Caco-2 (cell line): ENCODE measurements at regions of chrX and their contacts with region 1.

Region 1: DNA sequence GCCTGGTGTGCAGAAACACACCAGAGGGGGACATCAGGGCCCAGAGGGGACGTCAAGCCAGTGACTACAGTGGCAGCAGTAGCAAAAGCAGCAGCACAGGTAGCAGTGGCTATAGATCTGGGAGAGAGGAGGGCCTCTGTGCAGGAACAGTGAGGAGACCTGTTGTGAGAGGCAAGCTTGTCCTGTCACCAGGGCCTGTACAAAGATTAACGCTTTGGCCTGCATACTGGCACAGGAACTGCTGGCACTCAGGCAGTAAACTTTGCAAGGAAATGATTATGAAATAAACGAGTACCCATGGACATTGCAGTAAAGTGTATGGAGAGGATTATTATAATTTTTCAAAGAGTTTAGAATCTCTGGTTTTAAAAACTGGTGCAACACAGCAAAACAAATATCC is 5.5 kb upstream of the PHF8 start:
- DNase-seq: no peak
- H3K4me3 ChIP-seq: no peak overlapping the region
- H3K4me3 Mint-ChIP-seq: no peak overlapping the region
- H3K27ac Mint-ChIP-seq: no peak overlapping the region
- H3K4me1 ChIP-seq: 0 out of 2 replicates have a peak, but pooled peaks cover 5% of the 10 kb centered on the region
- H3K4me1 Mint-ChIP-seq: peaks cover 6% of the 10 kb centered on the region
- H3K27me3 ChIP-seq: no peaks in the 10 kb centered on the region
- H3K27me3 Mint-ChIP-seq: no peaks in the 10 kb centered on the region
- CTCF ChIP-seq: no peak

Region 2: GRCh38 chrX:53882331-53882730 is 167.5 kb before region 1 on chrX:
- CTCF ChIA-PET with region 1: no interaction called
- POLR2A ChIA-PET with region 1: no interaction called
- intact Hi-C with region 1: no loop called
- DNase-seq: peak; percentile 15 to 54
- H3K4me3 ChIP-seq: no peak overlapping the region
- H3K4me3 Mint-ChIP-seq: peak overlapping the region; percentile 12
- H3K27ac Mint-ChIP-seq: peak overlapping the region; percentile 67
- H3K4me1 ChIP-seq: peaks cover 4% of the 10 kb centered on the region; the same call in 1 of the 2 replicates
- H3K4me1 Mint-ChIP-seq: peaks cover 24% of the 10 kb centered on the region
- H3K27me3 ChIP-seq: no peaks in the 10 kb centered on the region
- H3K27me3 Mint-ChIP-seq: no peaks in the 10 kb centered on the region
- CTCF ChIP-seq: no peak

Region 3: GRCh38 chrX:54012830-54013500 is 36.8 kb before region 1 on chrX:
- CTCF ChIA-PET with region 1: interaction called, 10 read pairs
- POLR2A ChIA-PET with region 1: no interaction called
- intact Hi-C with region 1: no loop called
- DNase-seq: no peak
- H3K4me3 ChIP-seq: no peak overlapping the region
- H3K4me3 Mint-ChIP-seq: no peak overlapping the region
- H3K27ac Mint-ChIP-seq: no peak overlapping the region
- H3K4me1 ChIP-seq: no peaks in the 10 kb centered on the region
- H3K4me1 Mint-ChIP-seq: no peaks in the 10 kb centered on the region
- H3K27me3 ChIP-seq: no peaks in the 10 kb centered on the region
- H3K27me3 Mint-ChIP-seq: no peaks in the 10 kb centered on the region
- CTCF ChIP-seq: no peak

Region 4: DNA sequence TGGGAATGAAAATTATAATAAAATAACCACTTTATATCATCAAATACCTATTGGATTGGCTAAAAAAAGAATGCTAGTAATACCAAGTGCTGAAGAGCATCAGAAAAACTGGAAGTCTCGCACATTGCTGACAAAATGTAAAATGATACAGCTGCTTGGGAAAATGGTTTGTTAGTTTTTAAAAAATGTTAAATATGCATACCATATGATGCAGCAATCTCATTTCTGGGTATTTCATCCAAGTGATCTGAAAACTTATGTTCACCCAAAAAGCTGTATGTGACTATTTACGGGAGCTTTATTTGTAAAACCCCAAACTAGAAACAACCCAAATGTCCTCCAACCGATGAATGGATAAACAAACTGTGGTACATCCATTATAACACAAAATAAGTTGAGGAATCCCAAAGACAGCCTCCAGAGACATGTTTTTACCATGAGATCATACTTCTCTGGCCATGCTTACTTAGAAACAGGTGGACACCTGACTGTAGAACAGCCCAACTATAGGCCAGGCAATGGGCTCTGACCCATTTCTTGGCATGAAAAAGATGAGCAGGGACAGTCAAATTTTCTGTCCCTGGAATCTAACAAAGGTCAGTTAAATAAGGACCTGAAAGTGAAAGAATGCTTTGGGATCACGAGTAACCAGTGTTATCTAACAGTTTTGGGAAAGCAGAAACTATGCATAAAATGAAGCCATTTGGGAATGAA is 180.8 kb after region 1 on chrX:
- CTCF ChIA-PET with region 1: no interaction called
- POLR2A ChIA-PET with region 1: no interaction called
- intact Hi-C with region 1: no loop called
- DNase-seq: no peak
- H3K4me3 ChIP-seq: no peak overlapping the region
- H3K4me3 Mint-ChIP-seq: no peak overlapping the region
- H3K27ac Mint-ChIP-seq: no peak overlapping the region
- H3K4me1 ChIP-seq: no peaks in the 10 kb centered on the region
- H3K4me1 Mint-ChIP-seq: no peaks in the 10 kb centered on the region
- H3K27me3 ChIP-seq: no peaks in the 10 kb centered on the region
- H3K27me3 Mint-ChIP-seq: peaks cover 3% of the 10 kb centered on the region
- CTCF ChIP-seq: no peak

Region 5: GRCh38 chrX:54325713-54326112 is 275.9 kb after region 1 on chrX:
- CTCF ChIA-PET with region 1: no interaction called
- POLR2A ChIA-PET with region 1: no interaction called
- intact Hi-C with region 1: no loop called
- DNase-seq: no peak
- H3K4me3 ChIP-seq: no peak overlapping the region
- H3K4me3 Mint-ChIP-seq: no peak overlapping the region
- H3K27ac Mint-ChIP-seq: no peak overlapping the region
- H3K4me1 ChIP-seq: no peaks in the 10 kb centered on the region
- H3K4me1 Mint-ChIP-seq: no peaks in the 10 kb centered on the region
- H3K27me3 ChIP-seq: no peaks in the 10 kb centered on the region
- H3K27me3 Mint-ChIP-seq: no peaks in the 10 kb centered on the region
- CTCF ChIP-seq: no peak